Psoas muscle (tissue), 8 donors: ENCODE measurements at regions of chr3 and their contacts with region 1.

Region 1: GRCh38 chr3:159828542-159828943 is 160.1 kb upstream of the IL12A start:
- DNase-seq: no peak
- ATAC-seq: peak; percentile 43 to 67 (median 47)
- H3K4me3 ChIP-seq: peak overlapping the region; percentile 44
- H3K27ac ChIP-seq: peak overlapping the region; percentile 78
- H3K4me1 ChIP-seq: peaks cover 42% of the 10 kb centered on the region
- H3K27me3 ChIP-seq: no peaks in the 10 kb centered on the region
- CTCF ChIP-seq: peak; percentile 70

Region 2: DNA sequence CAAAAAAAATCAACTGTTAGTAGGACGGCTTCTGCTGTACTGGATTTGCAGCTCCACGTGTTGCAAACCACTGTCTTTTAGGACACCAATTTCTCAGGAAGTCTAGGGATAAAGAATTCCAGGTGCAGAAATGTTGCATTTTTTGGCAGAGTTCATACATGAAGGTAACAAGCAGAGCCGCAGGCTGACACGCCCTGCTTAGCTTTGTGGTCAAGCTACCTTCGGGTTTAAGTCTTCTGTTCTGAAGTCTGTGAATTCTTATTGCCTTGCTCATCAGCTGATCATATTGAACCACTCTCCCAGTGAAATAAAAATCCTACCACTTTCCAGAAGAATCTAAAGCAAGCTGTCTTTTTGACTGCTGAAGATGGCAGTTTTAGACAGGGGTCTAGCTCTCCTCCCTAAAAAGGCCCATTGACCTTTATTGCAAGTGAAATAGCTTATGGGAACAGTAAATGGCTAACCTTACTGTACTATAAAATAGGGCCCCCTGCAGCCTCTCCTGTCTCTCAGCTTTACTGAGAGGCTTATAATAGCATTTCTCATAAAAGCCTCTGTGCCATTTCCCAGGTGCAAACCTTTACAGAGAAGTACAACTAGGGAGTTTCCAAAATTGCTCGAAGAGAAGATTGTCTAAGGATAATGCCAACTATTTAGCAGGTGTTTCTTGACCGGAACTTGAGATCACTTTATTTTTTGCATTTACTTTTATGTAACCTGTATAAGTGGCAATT is 102.1 kb before region 1 on chr3:
- intact Hi-C with region 1: no loop called
- DNase-seq: no peak
- ATAC-seq: no peak
- H3K4me3 ChIP-seq: no peak overlapping the region
- H3K27ac ChIP-seq: no peak overlapping the region
- H3K4me1 ChIP-seq: no peaks in the 10 kb centered on the region
- H3K27me3 ChIP-seq: peaks cover 0 to 2% (median 0%) of the 10 kb centered on the region in 3 donors
- CTCF ChIP-seq: no peak

Region 3: GRCh38 chr3:159854500-159855124 is 26.1 kb after region 1 on chr3:
- intact Hi-C with region 1: loop called in 1 of 2 experiments (anchors 1 kb)
- DNase-seq: peak; percentile 24 to 78
- ATAC-seq: peak; percentile 64 to 77 (median 74)
- H3K4me3 ChIP-seq: peak overlapping the region; percentile 73
- H3K27ac ChIP-seq: peak overlapping the region; percentile 95
- H3K4me1 ChIP-seq: peaks cover 56% of the 10 kb centered on the region
- H3K27me3 ChIP-seq: no peaks in the 10 kb centered on the region
- CTCF ChIP-seq: no peak

Region 4: GRCh38 chr3:159884661-159885402 is 56.3 kb after region 1 on chr3:
- intact Hi-C with region 1: loop called (anchors 2 to 5 kb)
- DNase-seq: no peak
- ATAC-seq: no peak
- H3K4me3 ChIP-seq: no peak overlapping the region
- H3K27ac ChIP-seq: peak overlapping the region; percentile 91
- H3K4me1 ChIP-seq: peaks cover 59% of the 10 kb centered on the region
- H3K27me3 ChIP-seq: no peaks in the 10 kb centered on the region
- CTCF ChIP-seq: peak; percentile 44

Region 5: DNA sequence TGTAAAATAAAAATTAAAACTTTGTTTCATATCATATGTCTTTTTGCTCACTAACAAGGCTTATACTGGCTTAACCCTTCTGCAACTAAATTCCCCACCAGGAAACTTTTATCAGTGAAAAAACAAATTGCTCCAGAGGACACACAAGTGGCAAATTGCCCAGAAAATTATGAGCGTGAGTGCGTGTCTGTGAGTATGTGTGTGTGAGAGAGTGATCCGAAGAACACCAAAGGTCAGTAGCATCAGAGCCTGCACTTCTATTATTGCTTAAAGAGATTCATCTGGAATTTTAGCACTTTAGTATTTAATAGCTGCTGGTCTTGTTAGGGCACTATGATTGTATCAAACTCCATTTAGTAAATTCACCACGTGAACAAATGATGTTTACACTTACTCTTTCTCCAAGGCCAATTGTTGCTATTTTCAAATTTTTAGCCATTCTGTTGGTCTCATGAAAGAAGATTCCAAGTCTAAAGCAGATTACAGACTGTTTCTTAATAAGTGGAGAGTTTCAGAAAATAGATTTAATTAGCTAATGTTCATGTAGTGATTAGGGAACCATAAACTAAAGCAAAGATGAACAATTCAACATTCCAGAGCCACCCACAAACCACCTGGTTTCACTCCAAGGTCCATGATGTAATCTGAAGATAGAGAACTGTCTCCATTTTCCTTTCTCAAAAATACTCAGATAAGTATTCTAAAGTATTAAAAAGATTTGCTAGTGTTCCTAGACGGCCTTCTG is 69.0 kb after region 1 on chr3:
- intact Hi-C with region 1: loop called in 1 of 2 experiments (anchors 5 kb)
- DNase-seq: no peak
- ATAC-seq: no peak
- H3K4me3 ChIP-seq: no peak overlapping the region
- H3K27ac ChIP-seq: peak overlapping the region; percentile 53
- H3K4me1 ChIP-seq: peaks cover 9% of the 10 kb centered on the region
- H3K27me3 ChIP-seq: no peaks in the 10 kb centered on the region
- CTCF ChIP-seq: no peak

Region 6: GRCh38 chr3:160399125-160400029 is 570.8 kb after region 1 on chr3 and contains the starts of genes IFT80 and SMC4:
- intact Hi-C with region 1: loop called in 1 of 2 experiments (anchors 10 kb)
- DNase-seq: peak; percentile 94 to 97
- ATAC-seq: peak; percentile 99 to 100 (median 99)
- H3K4me3 ChIP-seq: peak within 1 kb of the TSS; percentile 76
- H3K27ac ChIP-seq: peak within 1 kb of the TSS; percentile 83
- H3K4me1 ChIP-seq: peaks cover 17% of the 10 kb centered on the region
- H3K27me3 ChIP-seq: no peaks in the 10 kb centered on the region
- CTCF ChIP-seq: no peak
- total RNA-seq, gene IFT80: 3.9 to 8.2 (median 5.3) TPM
- total RNA-seq, gene SMC4: 6.9 to 17.3 (median 9.0) TPM